HepG2 (cell line): ENCODE measurements at regions of chr2 and their contacts with region 1.

Region 1: GRCh38 chr2:225002039-225002655 is 40.1 kb downstream of the DOCK10 start:
- DNase-seq: peak; percentile 54
- ATAC-seq: peak; percentile 83
- H3K4me3 ChIP-seq: no peak overlapping the region
- H3K27ac ChIP-seq: no peak overlapping the region
- H3K4me1 ChIP-seq: no peaks in the 10 kb centered on the region
- H3K27me3 ChIP-seq: no peaks in the 10 kb centered on the region
- CTCF ChIP-seq: peak; percentile 71
- EP300 ChIP-seq: no peak
- POLR2A ChIP-seq: no peak
- RAD21 ChIP-seq: no peak

Region 2: DNA sequence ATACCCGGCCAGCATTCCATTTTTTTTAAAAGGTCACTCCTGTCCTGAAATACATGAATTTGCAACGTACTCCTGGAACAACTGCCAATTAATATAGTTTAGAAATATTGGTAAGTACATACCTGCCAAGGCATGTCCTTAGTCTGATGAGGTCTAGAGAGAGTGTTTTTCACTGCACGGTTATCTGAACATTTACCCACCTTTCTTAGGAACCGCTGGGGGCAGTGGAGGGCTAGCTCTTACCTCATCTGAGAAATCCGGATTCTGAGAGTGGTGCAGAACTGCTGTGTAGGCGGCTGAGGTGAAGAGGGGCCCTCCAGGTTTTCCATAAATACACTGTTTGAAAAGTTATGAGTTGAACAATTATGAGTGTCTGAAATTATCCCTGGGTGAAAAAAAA is 152.9 kb before region 1 on chr2:
- CTCF ChIA-PET with region 1: no interaction called
- POLR2A ChIA-PET with region 1: no interaction called
- in situ Hi-C with region 1: no loop called
- intact Hi-C with region 1: loop called (anchors 1 kb)
- DNase-seq: no peak
- ATAC-seq: peak; percentile 86
- H3K4me3 ChIP-seq: no peak overlapping the region
- H3K27ac ChIP-seq: no peak overlapping the region
- H3K4me1 ChIP-seq: no peaks in the 10 kb centered on the region
- H3K27me3 ChIP-seq: peaks cover 0 to 23% of the 10 kb centered on the region in 2 experiments; a peak in 2 of 5 replicates
- CTCF ChIP-seq: no peak
- EP300 ChIP-seq: no peak
- POLR2A ChIP-seq: no peak
- RAD21 ChIP-seq: no peak

Region 3: DNA sequence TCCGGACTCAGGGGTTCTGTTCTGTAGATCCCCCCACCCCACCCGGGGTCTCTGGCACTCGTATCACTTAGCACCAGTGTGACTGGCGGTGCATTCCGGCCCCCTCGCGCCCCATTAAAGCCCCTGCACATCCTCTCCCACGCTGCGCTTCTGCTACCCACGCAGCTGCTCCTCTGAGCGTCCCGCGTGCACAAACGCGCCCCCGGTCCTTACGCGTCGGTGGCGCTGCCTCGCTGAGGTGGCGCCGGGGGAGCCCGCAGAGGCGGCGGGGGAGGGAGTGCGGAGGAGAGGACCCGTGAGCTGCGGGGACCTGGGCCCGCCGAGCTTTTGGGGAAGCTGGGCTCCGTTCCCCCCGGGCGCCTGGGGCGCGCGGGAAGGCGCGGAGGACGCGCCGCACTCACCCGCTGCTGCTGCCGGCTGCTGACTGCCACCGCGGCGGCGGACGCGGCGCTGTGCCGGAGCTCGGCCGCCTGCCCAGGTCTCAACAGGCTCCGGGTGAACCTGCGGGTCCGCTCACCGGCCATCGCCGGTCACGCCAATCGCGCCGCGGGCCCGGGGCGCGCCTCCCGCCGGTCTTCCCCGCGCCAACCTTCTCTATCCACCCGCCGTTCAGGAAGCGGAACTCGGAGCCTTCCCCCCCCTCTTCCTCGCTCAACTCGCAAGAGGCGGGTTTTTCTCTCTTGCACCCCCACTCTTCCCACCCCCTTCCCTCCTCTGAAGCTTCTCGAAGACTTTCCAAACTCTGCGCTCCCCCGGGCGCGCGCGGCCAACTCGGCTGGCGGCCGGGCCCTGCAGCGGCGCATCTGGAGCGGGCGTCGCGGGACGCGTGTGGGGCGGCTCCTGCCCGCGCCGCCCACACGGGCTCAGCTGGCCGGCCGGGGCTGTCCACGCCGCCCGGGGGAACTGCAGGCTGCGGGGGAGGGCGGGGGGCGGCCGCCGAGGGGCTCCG is 40.0 kb after region 1 on chr2 and contains the start of gene DOCK10:
- CTCF ChIA-PET with region 1: no interaction called
- POLR2A ChIA-PET with region 1: no interaction called
- in situ Hi-C with region 1: no loop called
- intact Hi-C with region 1: no loop called
- DNase-seq: no peak
- ATAC-seq: peak; percentile 70
- H3K4me3 ChIP-seq: no peak within 1 kb of the TSS
- H3K27ac ChIP-seq: no peak within 1 kb of the TSS
- H3K4me1 ChIP-seq: no peaks in the 10 kb centered on the region
- H3K27me3 ChIP-seq: peaks cover 0 to 35% of the 10 kb centered on the region in 2 experiments; a peak in 3 of 5 replicates
- CTCF ChIP-seq: no peak
- EP300 ChIP-seq: no peak
- POLR2A ChIP-seq: no peak
- RAD21 ChIP-seq: no peak
- total RNA-seq, gene DOCK10: not detected in 2 replicates